H1 (cell line): ENCODE measurements at regions of chr2 and their contacts with region 1.

Region 1: DNA sequence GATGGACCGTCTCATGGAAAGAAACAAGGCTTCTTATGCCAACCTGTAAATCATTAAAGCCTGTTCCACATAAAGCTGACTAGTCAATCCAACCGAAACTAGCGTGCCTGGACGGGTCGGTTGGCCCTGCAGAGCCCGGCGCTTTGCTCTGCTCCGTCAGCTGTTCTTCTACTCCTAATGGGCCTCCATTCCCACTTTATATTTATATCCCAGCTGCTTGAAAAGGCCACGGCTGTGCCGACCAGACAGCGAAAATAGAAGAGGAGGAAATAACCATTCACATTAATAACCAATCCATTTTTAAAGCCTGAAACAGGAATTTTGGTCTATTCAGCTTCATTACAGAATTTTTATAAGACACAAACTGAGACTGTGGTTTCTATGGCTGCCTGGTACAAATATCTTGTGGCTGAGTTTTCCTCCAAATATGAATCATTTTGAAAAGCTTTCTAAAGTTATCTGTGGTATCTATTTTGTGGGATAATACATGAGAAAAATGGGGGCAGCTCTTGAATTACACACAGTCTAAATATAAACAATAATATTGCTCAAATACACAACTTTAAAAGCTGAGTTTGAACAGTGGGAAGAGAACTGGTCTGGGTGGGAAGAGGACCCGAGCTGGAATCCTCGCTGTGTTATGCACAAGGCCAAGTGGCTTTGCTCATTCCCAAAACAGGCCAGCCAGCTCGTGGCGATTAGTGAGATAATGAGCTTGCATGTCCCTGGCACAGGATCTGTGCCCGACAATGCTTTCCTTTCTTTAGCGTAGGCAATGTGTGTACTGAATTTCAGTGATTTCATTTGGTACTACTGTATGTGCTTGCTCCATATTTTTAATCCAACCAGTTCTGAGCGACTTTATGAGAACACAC is 10.5 kb upstream of the FAM124B start:
- DNase-seq: no peak
- H3K4me3 ChIP-seq: no peak overlapping the region
- H3K27ac ChIP-seq: no peak overlapping the region
- H3K4me1 ChIP-seq: peaks cover 0 to 4% (median 0%) of the 10 kb centered on the region in 4 experiments; a peak in 1 of 7 replicates
- H3K27me3 ChIP-seq: no peaks in the 10 kb centered on the region
- CTCF ChIP-seq: no peak
- EP300 ChIP-seq: no peak
- POLR2A ChIP-seq: no peak
- RAD21 ChIP-seq: no peak

Region 2: GRCh38 chr2:224401641-224402342 is 10.6 kb before region 1 on chr2 and contains the start of gene FAM124B:
- CTCF ChIA-PET with region 1: interaction called, 19 read pairs
- POLR2A ChIA-PET with region 1: no interaction called
- DNase-seq: no peak
- H3K4me3 ChIP-seq: no peak within 1 kb of the TSS
- H3K27ac ChIP-seq: no peak within 1 kb of the TSS; the same call in 1 of the 2 replicates
- H3K4me1 ChIP-seq: peaks cover 0 to 2% (median 1%) of the 10 kb centered on the region in 4 experiments; a peak in 2 of 7 replicates
- H3K27me3 ChIP-seq: no peaks in the 10 kb centered on the region
- CTCF ChIP-seq: no peak
- EP300 ChIP-seq: no peak
- POLR2A ChIP-seq: no peak
- RAD21 ChIP-seq: no peak
- total RNA-seq, gene FAM124B: 2.0 and 2.6 TPM in 2 replicates